ENCODE measurements at regions of chr16 and their contacts with region 1.

Region 1: DNA sequence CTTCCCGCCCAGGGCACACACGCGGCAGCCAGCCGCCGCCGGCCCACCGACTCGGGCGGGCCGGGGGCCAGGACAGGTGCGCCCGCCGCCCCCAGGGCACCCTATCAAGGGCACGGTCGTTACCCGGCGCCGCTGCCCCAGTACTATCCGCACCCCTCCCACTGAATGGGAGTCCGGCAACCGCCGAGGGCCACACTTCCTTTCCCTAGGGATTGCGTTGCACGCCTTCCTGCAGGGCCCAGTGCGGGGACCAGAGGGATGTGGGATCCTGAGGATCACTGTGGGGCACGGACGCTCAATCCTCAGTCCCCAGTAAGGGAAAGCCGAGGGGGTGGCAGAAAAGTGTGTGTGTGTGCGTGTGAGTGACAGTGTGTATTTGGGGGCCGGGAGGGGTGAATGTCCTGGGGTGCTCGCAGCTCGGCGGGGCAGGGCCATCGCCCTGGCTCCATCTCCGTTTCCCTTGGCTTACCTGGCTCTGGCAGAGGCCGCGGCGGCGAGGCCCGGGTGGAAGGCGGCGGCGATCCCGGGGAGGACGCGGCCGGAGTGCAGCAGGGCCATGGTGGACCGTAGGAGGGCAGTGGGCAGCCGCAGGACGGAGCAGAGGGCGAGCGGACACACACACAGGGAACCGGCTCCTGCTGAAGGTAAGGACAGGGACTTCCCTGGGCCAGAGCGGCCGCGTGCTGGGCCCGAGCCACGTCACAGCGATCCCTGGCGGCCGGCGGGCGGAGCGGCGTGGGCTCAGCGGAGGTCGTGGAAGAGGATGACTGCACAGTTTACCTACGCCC is at the start of gene GOT2:
- DNase-seq: peak; percentile 67 to 98 (median 82)

Region 2: DNA sequence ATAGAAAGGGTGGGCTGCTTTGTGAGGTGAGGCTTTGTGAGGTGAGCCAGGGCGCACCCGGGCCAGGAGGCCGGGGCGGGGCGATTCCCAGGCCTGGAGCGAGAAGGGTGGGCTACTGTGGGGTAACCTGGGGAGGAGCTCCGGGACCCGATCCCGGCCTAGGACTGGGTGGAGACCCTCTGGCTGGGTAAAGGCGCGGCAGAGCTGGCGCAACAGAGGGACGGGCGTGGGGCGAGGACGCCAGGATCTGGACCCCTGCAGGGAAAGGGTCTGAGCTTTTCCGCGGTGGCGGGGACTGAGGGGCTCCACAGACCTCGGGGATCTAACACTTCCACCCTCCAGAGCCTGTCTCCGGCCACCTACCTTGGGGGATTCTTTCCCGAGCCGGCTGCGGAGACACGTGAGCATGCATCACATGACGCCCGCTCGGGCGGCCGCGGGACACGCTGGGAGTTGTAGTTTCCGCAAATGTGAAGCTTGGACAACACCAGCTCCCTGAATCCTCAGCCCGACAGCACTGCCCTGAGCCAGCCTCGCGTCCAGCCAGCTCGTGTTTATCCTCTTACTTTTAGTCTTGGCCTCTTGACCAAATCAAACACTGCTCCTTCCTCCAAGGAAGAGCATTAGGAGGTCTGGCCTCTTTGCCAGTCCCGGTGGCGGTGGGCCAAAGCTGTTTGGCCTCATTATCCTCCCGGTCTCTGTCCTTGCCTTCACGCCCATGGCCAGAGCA is 49.3 kb before region 1 on chr16 and contains the start of gene SLC38A7:
- intact Hi-C with region 1: loop called (anchors 5 kb)
- DNase-seq: peak; percentile 87 to 99 (median 91)